Naive thymus-derived CD4-positive, alpha-beta T cell (primary cell): ENCODE measurements at regions of chr22 and their contacts with region 1.

Region 1: DNA sequence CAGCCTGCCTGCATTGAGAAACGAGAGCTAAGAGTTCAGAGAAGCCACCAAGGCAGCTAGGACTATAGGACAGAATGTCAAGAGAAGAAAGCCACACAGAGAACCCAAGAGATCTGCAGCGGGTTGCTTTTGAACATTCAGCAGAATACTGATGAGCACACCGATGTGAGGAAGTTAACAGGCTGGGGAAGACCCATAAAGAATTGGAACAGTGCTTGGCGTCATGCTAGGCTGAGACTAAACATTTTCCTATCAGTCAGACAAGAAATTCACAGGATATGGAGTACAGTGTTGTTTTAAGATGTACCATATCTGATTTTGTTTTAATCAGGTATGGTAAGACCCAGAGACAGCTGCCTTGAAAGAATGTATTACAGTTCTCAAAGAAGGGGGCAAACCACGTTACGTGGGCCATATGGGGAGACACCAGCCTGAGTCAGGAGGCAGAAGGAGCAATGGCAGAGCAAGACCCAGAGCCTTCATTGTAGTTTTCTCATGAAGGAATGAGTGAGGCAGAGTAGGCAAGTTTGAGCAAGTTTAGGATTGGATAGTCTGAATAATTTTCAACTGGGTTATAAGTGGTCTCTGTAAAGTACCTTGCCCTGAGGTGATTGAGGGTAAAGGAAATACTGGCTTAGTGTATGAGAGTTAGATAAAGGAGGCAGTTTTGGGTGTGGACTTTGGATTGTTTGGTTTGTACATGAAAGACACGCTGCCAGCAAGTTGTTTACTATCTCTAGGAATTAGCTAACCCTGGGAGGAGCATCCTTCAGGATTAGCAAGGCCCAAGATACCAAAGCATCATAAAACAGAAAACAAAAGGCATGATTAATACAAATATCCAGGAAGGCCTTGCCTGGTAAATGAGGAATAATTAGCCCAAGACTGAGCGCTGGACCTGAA is 14.3 kb downstream of the LRRC75B start:
- DNase-seq: no peak
- ATAC-seq: no peak
- H3K4me3 ChIP-seq: no peak overlapping the region
- H3K4me3 Mint-ChIP-seq: no peak overlapping the region
- H3K27ac ChIP-seq: no peak overlapping the region
- H3K27ac Mint-ChIP-seq: peak overlapping the region in 8 of 9 donors; percentile 3 to 77 (median 54)
- H3K4me1 ChIP-seq: no peaks in the 10 kb centered on the region
- H3K4me1 Mint-ChIP-seq: peaks cover 0 to 1% (median 0%) of the 10 kb centered on the region in 7 donors
- H3K27me3 ChIP-seq: no peaks in the 10 kb centered on the region
- H3K27me3 Mint-ChIP-seq: no peaks in the 10 kb centered on the region

Region 2: GRCh38 chr22:23904573-23905260 is 673.9 kb before region 1 on chr22:
- CTCF ChIA-PET with region 1: no interaction called
- POLR2A ChIA-PET with region 1: no interaction called
- intact Hi-C with region 1: no loop called
- DNase-seq: no peak
- ATAC-seq: no peak
- H3K4me3 ChIP-seq: no peak overlapping the region
- H3K4me3 Mint-ChIP-seq: no peak overlapping the region
- H3K27ac ChIP-seq: no peak overlapping the region
- H3K27ac Mint-ChIP-seq: peak overlapping the region in 1 of 9 donors; percentile 67
- H3K4me1 ChIP-seq: no peaks in the 10 kb centered on the region
- H3K4me1 Mint-ChIP-seq: peaks cover 0 to 12% (median 0%) of the 10 kb centered on the region in 7 donors
- H3K27me3 ChIP-seq: no peaks in the 10 kb centered on the region
- H3K27me3 Mint-ChIP-seq: peaks cover 0 to 24% (median 5%) of the 10 kb centered on the region in 5 donors

Region 3: GRCh38 chr22:24553597-24554312 is 24.9 kb before region 1 on chr22:
- CTCF ChIA-PET with region 1: no interaction called
- POLR2A ChIA-PET with region 1: no interaction called
- intact Hi-C with region 1: no loop called
- DNase-seq: peak in 2 of 9 donors; percentile 3 to 8
- ATAC-seq: no peak
- H3K4me3 ChIP-seq: peak overlapping the region; percentile 88
- H3K4me3 Mint-ChIP-seq: peak overlapping the region; percentile 90 to 99 (median 96)
- H3K27ac ChIP-seq: peak overlapping the region; percentile 92
- H3K27ac Mint-ChIP-seq: peak overlapping the region; percentile 73 to 100 (median 93)
- H3K4me1 ChIP-seq: peaks cover 20 to 29% of the 10 kb centered on the region in 2 donors
- H3K4me1 Mint-ChIP-seq: peaks cover 43 to 71% (median 59%) of the 10 kb centered on the region in 7 donors
- H3K27me3 ChIP-seq: no peaks in the 10 kb centered on the region
- H3K27me3 Mint-ChIP-seq: no peaks in the 10 kb centered on the region

Region 4: DNA sequence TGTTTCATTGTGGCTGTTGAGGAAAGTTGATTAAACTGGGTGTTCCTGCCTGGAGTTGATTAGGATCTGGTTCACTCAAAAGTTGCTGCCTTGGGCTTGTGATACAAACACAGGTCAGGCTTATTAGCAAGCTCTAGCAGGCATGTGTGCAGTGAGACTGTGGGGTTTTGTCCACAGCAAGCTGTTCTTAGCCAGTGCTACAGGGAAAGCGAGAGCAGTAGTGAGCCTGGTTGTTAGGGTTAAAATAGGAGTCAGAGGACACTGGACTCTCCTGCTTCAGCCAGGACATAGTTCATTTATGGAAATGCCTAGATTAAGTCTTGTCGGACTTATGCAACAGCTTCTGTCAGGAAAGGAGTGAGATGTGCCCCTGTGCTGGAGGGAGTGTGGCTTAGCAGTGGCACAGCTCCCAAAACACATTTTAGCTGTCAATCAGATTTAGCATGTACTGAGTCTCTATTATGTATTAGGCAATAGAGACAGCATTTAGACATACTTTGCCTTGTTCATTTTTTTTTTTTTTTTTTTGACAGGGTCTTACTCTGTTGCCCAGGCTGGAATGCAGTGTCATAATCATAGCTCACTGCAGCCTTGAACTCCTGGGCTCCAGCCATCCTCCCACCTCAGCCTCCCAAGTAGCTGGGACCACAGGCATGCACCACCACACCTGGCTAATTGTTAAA is 14.1 kb before region 1 on chr22:
- CTCF ChIA-PET with region 1: no interaction called
- POLR2A ChIA-PET with region 1: no interaction called
- intact Hi-C with region 1: loop called in 1 of 2 experiments (anchors 1 kb)
- DNase-seq: no peak
- ATAC-seq: no peak
- H3K4me3 ChIP-seq: no peak overlapping the region
- H3K4me3 Mint-ChIP-seq: peak overlapping the region in 5 of 10 donors; percentile 8 to 36 (median 19)
- H3K27ac ChIP-seq: no peak overlapping the region
- H3K27ac Mint-ChIP-seq: peak overlapping the region in 6 of 9 donors; percentile 45 to 83 (median 74)
- H3K4me1 ChIP-seq: peaks cover 7 to 22% of the 10 kb centered on the region in 2 donors
- H3K4me1 Mint-ChIP-seq: peaks cover 25 to 63% (median 50%) of the 10 kb centered on the region in 7 donors
- H3K27me3 ChIP-seq: no peaks in the 10 kb centered on the region
- H3K27me3 Mint-ChIP-seq: no peaks in the 10 kb centered on the region